CD14-positive monocyte (primary cell): ENCODE measurements at regions of chr14 and their contacts with region 1.

Region 1: GRCh38 chr14:75982266-75983018 is 647 bp upstream of the TGFB3 start:
- DNase-seq: peak; percentile 59 to 70 (median 68)
- H3K4me3 ChIP-seq: peak overlapping the region; percentile 48 to 83 (median 76)
- H3K4me3 Mint-ChIP-seq: peak overlapping the region; percentile 92 to 98
- H3K27ac ChIP-seq: peak overlapping the region in 1 of 2 donors; percentile 72
- H3K27ac Mint-ChIP-seq: peak overlapping the region in 6 of 7 donors; percentile 55 to 89 (median 78)
- H3K4me1 ChIP-seq: peaks cover 27 to 32% of the 10 kb centered on the region in 2 donors
- H3K4me1 Mint-ChIP-seq: peaks cover 43% of the 10 kb centered on the region
- H3K27me3 ChIP-seq: peaks cover 0 to 11% of the 10 kb centered on the region in 2 donors
- H3K27me3 Mint-ChIP-seq: peaks cover 17 to 41% (median 24%) of the 10 kb centered on the region in 3 donors
- CTCF ChIP-seq: peak; percentile 72

Region 2: GRCh38 chr14:75709207-75709812 is 273.1 kb before region 1 on chr14:
- intact Hi-C with region 1: loop called (anchors 1 to 2 kb)
- DNase-seq: peak; percentile 43 to 63 (median 56)
- H3K4me3 ChIP-seq: no peak overlapping the region
- H3K4me3 Mint-ChIP-seq: no peak overlapping the region
- H3K27ac ChIP-seq: no peak overlapping the region
- H3K27ac Mint-ChIP-seq: no peak overlapping the region
- H3K4me1 ChIP-seq: no peaks in the 10 kb centered on the region
- H3K4me1 Mint-ChIP-seq: no peaks in the 10 kb centered on the region
- H3K27me3 ChIP-seq: no peaks in the 10 kb centered on the region
- H3K27me3 Mint-ChIP-seq: no peaks in the 10 kb centered on the region
- CTCF ChIP-seq: peak; percentile 73

Region 3: DNA sequence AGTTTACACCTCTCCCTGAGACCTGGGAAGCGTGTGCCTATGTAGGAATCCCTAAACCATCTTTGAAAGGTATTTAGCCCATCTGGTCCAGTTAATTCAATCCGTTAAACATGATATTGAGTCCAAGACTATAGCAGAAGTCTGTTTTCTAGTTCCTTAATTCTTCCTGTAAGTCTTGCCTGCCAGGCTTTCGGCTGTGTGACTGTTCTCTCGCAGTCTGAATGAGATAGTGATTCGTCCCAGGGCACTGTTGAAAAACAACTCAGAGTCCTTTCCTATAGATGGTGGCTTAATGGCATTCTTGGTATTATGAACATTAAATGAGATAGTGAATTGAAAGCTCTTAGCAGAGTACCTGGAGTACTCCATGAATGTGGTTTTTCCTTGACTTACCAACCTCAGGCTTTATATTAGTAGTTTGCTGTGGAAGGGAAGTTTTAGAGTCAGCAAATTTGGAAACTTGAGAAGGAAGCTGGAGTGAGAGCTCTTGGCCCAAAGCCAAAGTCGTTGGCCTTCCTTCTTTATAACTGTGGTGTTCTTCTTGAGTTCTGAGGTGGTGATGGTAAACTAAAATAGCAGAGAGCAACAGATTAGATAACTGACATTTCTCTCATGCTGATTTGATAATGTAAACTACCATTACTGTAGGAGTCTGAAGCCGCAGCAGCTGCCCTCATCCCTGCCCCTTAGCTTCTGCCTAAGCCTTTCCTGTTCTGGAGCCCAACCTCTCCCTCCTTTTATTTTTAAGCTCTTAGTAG is 77.1 kb before region 1 on chr14:
- intact Hi-C with region 1: loop called in 1 of 2 experiments (anchors 2 kb)
- DNase-seq: peak; percentile 33 to 46 (median 39)
- H3K4me3 ChIP-seq: no peak overlapping the region
- H3K4me3 Mint-ChIP-seq: no peak overlapping the region
- H3K27ac ChIP-seq: peak overlapping the region in 1 of 2 donors; percentile 19
- H3K27ac Mint-ChIP-seq: peak overlapping the region in 5 of 7 donors; percentile 8 to 73 (median 69)
- H3K4me1 ChIP-seq: peaks cover 10 to 16% of the 10 kb centered on the region in 2 donors
- H3K4me1 Mint-ChIP-seq: peaks cover 19% of the 10 kb centered on the region
- H3K27me3 ChIP-seq: no peaks in the 10 kb centered on the region
- H3K27me3 Mint-ChIP-seq: peaks cover 0 to 1% (median 0%) of the 10 kb centered on the region in 3 donors
- CTCF ChIP-seq: no peak

Region 4: GRCh38 chr14:76151398-76152339 is 169.2 kb after region 1 on chr14 and contains the start of gene GPATCH2L:
- intact Hi-C with region 1: loop called in 1 of 2 experiments (anchors 5 kb)
- DNase-seq: peak; percentile 91 to 95 (median 94)
- H3K4me3 ChIP-seq: peak within 1 kb of the TSS; percentile 82 to 86 (median 85)
- H3K4me3 Mint-ChIP-seq: peak within 1 kb of the TSS; percentile 97 to 98
- H3K27ac ChIP-seq: peak within 1 kb of the TSS; percentile 94 to 99
- H3K27ac Mint-ChIP-seq: peak within 1 kb of the TSS; percentile 99 to 100 (median 99)
- H3K4me1 ChIP-seq: peaks cover 41 to 49% of the 10 kb centered on the region in 2 donors
- H3K4me1 Mint-ChIP-seq: peaks cover 49% of the 10 kb centered on the region
- H3K27me3 ChIP-seq: peaks cover 3 to 18% of the 10 kb centered on the region in 2 donors
- H3K27me3 Mint-ChIP-seq: peaks cover 2 to 16% (median 8%) of the 10 kb centered on the region in 3 donors
- CTCF ChIP-seq: no peak
- polyA plus RNA-seq, gene GPATCH2L: 10.6 to 28.3 (median 13.8) TPM